Gastrocnemius medialis (tissue), 4 donors: ENCODE measurements at regions of chr9 and their contacts with region 1.

Region 1: DNA sequence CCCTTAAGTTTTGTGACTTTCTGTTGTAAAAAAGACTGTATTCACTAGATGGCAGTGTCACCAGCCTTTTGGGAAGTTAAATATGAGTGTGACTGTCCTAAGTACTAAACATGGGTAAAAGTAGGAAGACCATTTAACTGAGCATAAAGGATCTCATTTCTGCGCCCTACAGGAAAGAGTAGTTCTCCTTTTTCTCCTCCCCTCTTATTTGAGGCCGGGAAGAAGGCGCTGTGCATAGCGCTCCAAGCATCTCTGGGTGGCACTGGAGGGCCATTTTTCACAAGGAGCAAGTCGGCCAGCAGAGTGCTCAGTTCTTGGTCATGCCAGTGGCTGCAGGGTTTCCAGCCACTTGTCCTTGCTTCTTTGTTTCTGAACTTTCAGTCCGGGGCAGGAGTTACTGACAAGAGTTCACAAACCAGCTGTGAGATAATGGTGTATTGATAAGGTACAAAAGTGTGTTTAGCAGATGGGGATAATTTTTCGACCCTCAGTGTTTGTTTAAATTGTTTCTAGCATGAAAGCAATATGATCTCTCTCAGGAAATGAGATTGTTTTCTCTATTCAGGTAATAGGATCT is 227.6 kb upstream of the DMRT1 start:
- DNase-seq: peak; percentile 72 to 80
- ATAC-seq: peak; percentile 95 to 99
- H3K4me3 ChIP-seq: peak overlapping the region in 1 of 4 donors; percentile 14
- H3K27ac ChIP-seq: peak overlapping the region in 3 of 4 donors; percentile 35 to 43 (median 42)
- H3K4me1 ChIP-seq: peaks cover 7% of the 10 kb centered on the region in 2 donors
- H3K27me3 ChIP-seq: no peaks in the 10 kb centered on the region
- CTCF ChIP-seq: peak in 4 of 5 experiments; percentile 80 to 96 (median 82)
- POLR2A ChIP-seq: no peak

Region 2: GRCh38 chr9:642014-642413 is 28.2 kb after region 1 on chr9:
- in situ Hi-C with region 1: no loop called
- intact Hi-C with region 1: loop called (anchors 2 kb)
- DNase-seq: no peak
- ATAC-seq: peak; percentile 68 to 75
- H3K4me3 ChIP-seq: no peak overlapping the region
- H3K27ac ChIP-seq: peak overlapping the region in 2 of 4 donors; percentile 2 to 18
- H3K4me1 ChIP-seq: peaks cover 13 to 21% of the 10 kb centered on the region in 2 donors
- H3K27me3 ChIP-seq: no peaks in the 10 kb centered on the region
- CTCF ChIP-seq: no peak
- POLR2A ChIP-seq: no peak

Region 3: DNA sequence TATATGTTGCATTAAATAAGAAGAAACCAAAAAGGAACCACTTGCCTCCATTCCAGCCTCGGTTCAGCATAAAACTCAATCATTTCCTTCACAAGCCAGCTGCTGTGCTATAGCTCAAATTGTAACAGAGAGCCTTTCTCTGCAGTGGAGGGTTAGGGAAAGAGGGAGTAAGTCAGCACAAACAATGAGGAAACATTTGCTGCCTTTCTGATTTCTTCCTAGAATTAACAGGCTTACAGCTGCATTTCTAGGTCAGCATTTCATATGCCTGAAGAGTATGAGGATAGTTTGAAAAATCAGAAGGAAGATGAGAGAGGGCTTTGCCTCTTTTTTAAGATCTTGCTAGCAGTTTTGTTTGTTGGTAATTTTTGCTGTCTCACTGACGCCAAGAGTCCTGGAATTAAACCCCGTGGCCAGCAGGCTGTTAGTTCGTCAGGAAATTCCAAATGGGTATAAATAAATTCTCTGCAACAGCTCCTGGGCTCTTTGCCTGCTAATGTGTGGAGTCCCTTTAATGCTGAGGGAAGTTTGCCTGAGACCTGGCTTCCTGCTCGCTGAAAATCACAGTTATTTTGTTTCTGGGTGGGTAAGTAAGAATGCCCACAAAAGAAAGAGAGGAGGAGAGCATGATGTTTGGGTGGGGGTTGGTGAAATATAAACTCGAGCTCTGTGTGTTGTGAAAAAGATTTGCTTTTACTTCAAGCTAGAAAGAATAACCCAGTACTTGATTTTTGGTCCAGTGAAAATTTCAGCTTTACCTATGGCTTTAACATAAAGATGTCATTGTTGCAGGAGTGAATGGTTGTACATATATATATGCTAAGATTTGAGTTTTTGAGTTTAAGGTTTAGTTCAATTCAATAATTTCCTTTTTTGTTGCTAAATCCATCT is 79.6 kb after region 1 on chr9:
- in situ Hi-C with region 1: no loop called
- intact Hi-C with region 1: loop called (anchors 5 kb)
- DNase-seq: peak; percentile 74 to 81
- ATAC-seq: peak; percentile 76 to 77
- H3K4me3 ChIP-seq: peak overlapping the region; percentile 47 to 56 (median 52)
- H3K27ac ChIP-seq: peak overlapping the region; percentile 87 to 95 (median 92)
- H3K4me1 ChIP-seq: peaks cover 65 to 68% of the 10 kb centered on the region in 2 donors
- H3K27me3 ChIP-seq: no peaks in the 10 kb centered on the region
- CTCF ChIP-seq: no peak
- POLR2A ChIP-seq: peak; percentile 68 to 76

Region 4: DNA sequence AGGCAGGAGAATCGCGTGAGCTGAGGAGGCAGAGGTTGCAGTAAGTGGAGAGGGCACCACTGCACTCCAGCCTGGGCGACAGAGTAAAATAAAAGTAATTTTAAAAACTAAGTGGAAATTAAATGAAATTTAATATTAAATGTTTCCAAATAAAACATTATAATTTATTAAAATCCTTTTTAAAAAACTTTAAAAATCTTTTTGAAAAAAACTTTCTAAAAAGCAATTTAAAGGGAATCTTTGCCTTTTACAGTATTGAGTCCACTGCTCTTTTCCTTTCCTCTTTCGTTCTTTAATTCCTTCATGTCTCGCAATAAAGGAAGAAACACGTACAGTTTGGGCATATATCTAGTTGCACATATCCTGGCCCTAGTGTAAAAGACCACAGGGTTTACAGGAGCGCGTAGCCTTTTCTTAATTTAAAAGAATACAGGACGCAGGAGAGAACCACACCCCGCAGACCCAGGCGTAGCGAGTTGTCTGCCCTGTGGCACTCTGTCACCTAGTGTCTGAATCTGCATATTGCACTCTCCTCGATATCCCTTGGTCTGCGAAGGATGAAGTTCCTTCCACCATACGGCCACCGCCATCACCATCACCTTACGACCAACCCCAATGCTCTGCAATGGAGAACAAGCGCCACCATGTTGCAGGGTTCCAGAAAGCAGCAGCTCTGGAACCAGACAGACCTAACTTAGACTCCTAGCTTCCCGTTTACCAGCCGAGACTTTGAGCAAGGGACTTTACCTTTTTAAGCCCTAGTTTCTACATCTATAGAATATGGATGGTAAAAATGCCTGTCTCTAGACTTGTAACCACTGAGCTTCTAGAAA is 150.0 kb after region 1 on chr9:
- in situ Hi-C with region 1: loop called (anchors 5 kb)
- intact Hi-C with region 1: loop called (anchors 1 kb)
- DNase-seq: peak; percentile 56 to 66
- ATAC-seq: peak; percentile 92 to 99
- H3K4me3 ChIP-seq: peak overlapping the region in 3 of 4 donors; percentile 25 to 41 (median 33)
- H3K27ac ChIP-seq: no peak overlapping the region
- H3K4me1 ChIP-seq: peaks cover 0 to 3% of the 10 kb centered on the region in 2 donors
- H3K27me3 ChIP-seq: no peaks in the 10 kb centered on the region
- CTCF ChIP-seq: peak; percentile 90 to 96 (median 93)
- POLR2A ChIP-seq: no peak

Region 5: DNA sequence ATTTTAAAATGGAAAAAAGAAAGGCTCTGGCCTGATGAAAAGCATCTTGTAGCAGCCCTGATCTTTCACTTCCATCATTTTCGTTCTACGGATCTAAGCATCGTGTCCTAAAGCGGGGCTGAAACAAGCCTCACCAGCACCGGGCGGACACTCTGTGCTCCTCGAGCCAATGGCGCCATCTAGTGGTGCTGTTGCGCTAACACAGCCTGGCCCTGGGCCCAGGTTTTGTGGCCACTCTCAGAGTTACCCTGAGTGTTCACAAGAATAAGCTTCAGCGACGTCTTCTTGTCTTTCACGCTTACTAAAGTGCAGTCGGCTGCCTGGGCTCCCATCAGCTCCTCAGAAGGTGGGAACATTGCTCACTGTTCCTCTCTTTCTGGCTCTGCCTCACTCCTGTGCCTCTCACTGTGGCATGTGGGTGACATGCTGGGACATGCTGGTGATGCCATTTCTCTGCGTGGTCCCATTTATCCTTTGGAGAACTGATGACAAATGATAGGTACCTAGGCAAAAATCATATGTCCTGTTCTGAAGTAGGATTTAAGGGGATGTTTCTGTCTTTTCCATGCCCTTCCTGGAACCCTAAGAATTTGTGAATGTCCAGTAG is 395.3 kb after region 1 on chr9:
- in situ Hi-C with region 1: loop called (anchors 25 kb)
- intact Hi-C with region 1: loop called (anchors 10 kb)
- DNase-seq: peak; percentile 32 to 67
- ATAC-seq: peak; percentile 88 to 92
- H3K4me3 ChIP-seq: no peak overlapping the region
- H3K27ac ChIP-seq: no peak overlapping the region
- H3K4me1 ChIP-seq: no peaks in the 10 kb centered on the region
- H3K27me3 ChIP-seq: no peaks in the 10 kb centered on the region
- CTCF ChIP-seq: peak; percentile 87 to 99 (median 94)
- POLR2A ChIP-seq: no peak